PC-9 (cell line): ENCODE measurements at regions of chr20 and their contacts with region 1.

Region 1: DNA sequence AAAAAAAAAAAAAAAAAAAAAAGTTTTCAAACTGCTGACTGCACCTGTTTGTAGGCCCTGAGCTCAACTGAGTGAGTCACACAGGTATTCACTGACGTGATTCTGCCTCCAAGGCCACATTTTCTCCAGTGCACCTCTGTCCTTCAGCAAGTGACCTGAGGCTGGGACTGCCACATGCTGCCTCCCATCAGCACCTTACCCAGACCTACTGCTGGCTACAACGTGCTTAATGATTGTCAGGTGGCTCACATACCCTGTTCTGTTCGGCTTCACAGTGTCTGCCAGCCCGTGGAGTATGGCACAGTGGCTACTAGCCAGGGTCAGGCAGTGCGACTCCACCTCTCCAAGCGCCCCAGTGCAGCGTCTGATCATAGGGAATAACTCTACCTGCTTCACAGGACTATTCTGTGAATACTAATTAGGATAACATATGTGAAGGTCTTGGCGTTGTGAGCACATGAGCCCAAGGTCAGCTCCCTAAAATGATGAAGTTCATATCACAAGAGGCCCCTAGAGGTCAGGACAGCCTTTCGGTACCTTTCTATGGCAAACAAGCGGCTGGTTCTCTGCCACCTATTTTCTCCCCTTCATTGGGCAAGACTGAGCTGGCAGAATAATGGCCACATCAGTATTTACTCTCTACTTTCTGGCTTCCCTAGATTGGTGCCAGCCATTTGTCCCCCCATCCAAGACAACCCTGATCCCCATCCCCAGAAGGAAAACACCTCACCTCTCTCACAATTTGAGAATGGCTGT is 28.1 kb downstream of the RIPOR3 start:
- DNase-seq: peak; percentile 81 to 96
- H3K4me3 ChIP-seq: no peak overlapping the region
- H3K27ac ChIP-seq: peak overlapping the region; percentile 85
- H3K4me1 ChIP-seq: peaks cover 67% of the 10 kb centered on the region
- H3K27me3 ChIP-seq: no peaks in the 10 kb centered on the region
- CTCF ChIP-seq: peak; percentile 71

Region 2: DNA sequence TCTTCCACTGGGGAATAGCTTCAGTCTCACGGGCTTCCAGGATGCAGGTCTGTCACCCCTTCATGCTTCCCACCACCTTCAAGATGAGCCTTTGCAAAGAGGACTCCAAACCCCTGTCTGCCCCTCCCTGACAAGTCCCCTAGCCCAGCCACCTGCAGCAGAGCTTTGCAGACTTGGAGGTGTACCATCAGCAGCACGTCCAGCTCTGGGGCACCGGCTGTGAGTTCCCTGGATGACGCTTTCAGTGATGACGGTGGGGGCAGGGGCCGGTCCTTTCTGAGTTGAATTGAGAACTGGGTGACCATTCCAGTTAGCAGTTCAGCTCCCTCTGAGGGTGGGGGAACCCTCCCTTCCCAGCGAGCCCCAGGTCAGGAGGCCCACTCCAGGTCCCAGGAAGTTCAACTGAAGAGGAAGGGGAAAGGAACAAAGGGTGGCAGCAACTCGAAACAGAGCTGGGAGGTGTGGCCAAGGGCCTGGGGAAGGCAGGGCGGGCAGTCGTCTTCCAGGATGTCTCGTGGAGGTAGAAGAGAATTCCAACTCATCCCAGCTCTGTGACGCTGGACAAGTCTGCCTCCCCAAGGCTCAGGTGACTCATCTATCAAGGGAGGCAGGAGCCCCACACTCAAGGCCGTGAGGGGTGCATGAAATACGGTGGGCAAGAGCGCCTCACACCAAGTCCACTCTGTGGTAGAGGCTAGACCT is 67.1 kb before region 1 on chr20:
- CTCF ChIA-PET with region 1: no interaction called
- POLR2A ChIA-PET with region 1: no interaction called
- intact Hi-C with region 1: no loop called
- DNase-seq: peak in 1 of 2 experiments; percentile 51
- H3K4me3 ChIP-seq: no peak overlapping the region
- H3K27ac ChIP-seq: no peak overlapping the region
- H3K4me1 ChIP-seq: no peaks in the 10 kb centered on the region
- H3K27me3 ChIP-seq: no peaks in the 10 kb centered on the region
- CTCF ChIP-seq: no peak

Region 3: DNA sequence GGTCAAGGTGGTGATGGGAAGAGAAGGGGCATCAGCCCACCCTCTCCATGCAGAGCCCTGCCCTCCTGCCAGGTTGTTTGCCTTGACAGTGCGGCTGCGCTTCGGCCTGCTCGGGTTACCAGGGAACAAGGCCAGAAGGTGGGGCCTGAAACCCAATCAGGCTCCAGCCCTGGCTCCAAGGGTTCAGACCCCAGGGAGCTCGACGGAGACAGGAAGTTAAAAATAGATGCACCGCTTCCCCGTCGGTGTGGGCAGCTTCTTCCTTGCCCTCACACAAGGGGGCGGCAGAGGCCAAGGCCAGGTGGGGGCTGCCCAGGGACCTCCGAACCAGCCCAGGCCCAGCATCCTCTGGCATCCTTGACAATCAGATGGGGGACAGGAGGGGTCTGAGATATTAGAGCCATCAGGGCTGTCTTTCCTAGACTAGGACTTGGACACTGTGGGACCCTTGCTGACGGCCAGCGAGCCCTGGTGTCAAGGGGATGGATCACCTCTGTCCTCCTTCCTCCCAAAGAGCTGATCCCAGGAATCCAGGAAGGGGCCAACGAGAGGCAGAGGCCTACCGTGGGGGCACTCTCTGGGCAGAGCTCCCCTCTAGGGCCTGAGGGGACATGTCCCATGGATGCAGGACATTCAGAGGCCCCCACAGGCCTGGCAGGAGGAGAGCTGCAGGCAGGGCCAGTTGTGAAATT is 37.1 kb before region 1 on chr20:
- CTCF ChIA-PET with region 1: interaction called, 11 read pairs
- POLR2A ChIA-PET with region 1: no interaction called
- intact Hi-C with region 1: loop called (anchors 5 kb)
- DNase-seq: peak in 1 of 2 experiments; percentile 65
- H3K4me3 ChIP-seq: no peak overlapping the region
- H3K27ac ChIP-seq: no peak overlapping the region
- H3K4me1 ChIP-seq: peaks cover 45% of the 10 kb centered on the region
- H3K27me3 ChIP-seq: no peaks in the 10 kb centered on the region
- CTCF ChIP-seq: peak; percentile 72

Region 4: GRCh38 chr20:50713657-50714101 is 50.4 kb after region 1 on chr20:
- CTCF ChIA-PET with region 1: interaction called, 8 read pairs
- POLR2A ChIA-PET with region 1: interaction called, 3 read pairs
- intact Hi-C with region 1: loop called (anchors 1 kb)
- DNase-seq: no peak
- H3K4me3 ChIP-seq: no peak overlapping the region
- H3K27ac ChIP-seq: no peak overlapping the region
- H3K4me1 ChIP-seq: peaks cover 93% of the 10 kb centered on the region
- H3K27me3 ChIP-seq: no peaks in the 10 kb centered on the region
- CTCF ChIP-seq: no peak

Region 5: GRCh38 chr20:50731055-50731871 is 68.0 kb after region 1 on chr20 and contains the start of gene PARD6B:
- CTCF ChIA-PET with region 1: interaction called, 9 read pairs
- POLR2A ChIA-PET with region 1: interaction called, 24 read pairs
- intact Hi-C with region 1: loop called (anchors 1 kb)
- DNase-seq: peak; percentile 96 to 100
- H3K4me3 ChIP-seq: peak within 1 kb of the TSS; percentile 85
- H3K27ac ChIP-seq: peak within 1 kb of the TSS; percentile 91
- H3K4me1 ChIP-seq: peaks cover 71% of the 10 kb centered on the region
- H3K27me3 ChIP-seq: no peaks in the 10 kb centered on the region
- CTCF ChIP-seq: no peak
- total RNA-seq, gene PARD6B: 52.2 and 80.3 TPM in 2 replicates

Region 6: GRCh38 chr20:50750145-50750671 is 86.9 kb after region 1 on chr20:
- CTCF ChIA-PET with region 1: interaction called, 22 read pairs
- POLR2A ChIA-PET with region 1: interaction called, 3 read pairs
- intact Hi-C with region 1: no loop called
- DNase-seq: no peak
- H3K4me3 ChIP-seq: no peak overlapping the region
- H3K27ac ChIP-seq: no peak overlapping the region
- H3K4me1 ChIP-seq: peaks cover 36% of the 10 kb centered on the region
- H3K27me3 ChIP-seq: no peaks in the 10 kb centered on the region
- CTCF ChIP-seq: no peak